ENCODE measurements at regions of chr10 and their contacts with region 1.

Region 1: GRCh38 chr10:35707642-35708420 is 65.7 kb upstream of the FZD8 start:
- DNase-seq: no peak
- H3K4me3 ChIP-seq: no peak overlapping the region
- H3K27ac ChIP-seq: no peak overlapping the region
- H3K4me1 ChIP-seq: no peaks in the 10 kb centered on the region
- H3K27me3 ChIP-seq: no peaks in the 10 kb centered on the region
- CTCF ChIP-seq: no peak

Region 2: GRCh38 chr10:35462491-35462934 is 245.3 kb before region 1 on chr10:
- CTCF ChIA-PET with region 1: no interaction called
- dilution Hi-C with region 1: no loop called
- in situ Hi-C with region 1: no loop called
- intact Hi-C with region 1: no loop called
- DNase-seq: no peak
- H3K4me3 ChIP-seq: no peak overlapping the region
- H3K27ac ChIP-seq: no peak overlapping the region
- H3K4me1 ChIP-seq: peaks cover 16% of the 10 kb centered on the region
- H3K27me3 ChIP-seq: no peaks in the 10 kb centered on the region
- CTCF ChIP-seq: no peak

Region 3: DNA sequence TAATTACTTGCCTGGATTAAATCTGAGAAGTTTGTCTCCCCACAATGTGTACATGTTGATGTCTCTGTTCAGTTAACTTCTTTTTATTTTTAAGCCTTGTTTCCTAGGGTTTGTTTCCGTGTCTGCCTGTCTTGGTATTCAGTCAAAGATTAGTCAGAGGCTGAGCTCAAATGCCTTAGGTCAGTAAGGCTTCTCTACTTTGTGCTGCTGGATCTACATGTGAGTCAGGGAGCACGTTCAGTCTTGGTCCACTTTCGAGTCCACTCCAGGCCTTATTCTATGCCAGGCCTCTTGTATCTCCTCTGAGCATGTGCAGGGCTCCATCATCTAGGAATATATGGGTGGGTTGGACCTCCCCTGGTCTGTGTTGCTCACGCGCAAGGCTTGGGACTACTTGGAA is 27.6 kb after region 1 on chr10:
- CTCF ChIA-PET with region 1: no interaction called
- dilution Hi-C with region 1: loop called (anchors 5 kb)
- in situ Hi-C with region 1: no loop called
- intact Hi-C with region 1: no loop called
- DNase-seq: peak; percentile 72
- H3K4me3 ChIP-seq: no peak overlapping the region
- H3K27ac ChIP-seq: no peak overlapping the region
- H3K4me1 ChIP-seq: peaks cover 2% of the 10 kb centered on the region
- H3K27me3 ChIP-seq: no peaks in the 10 kb centered on the region
- CTCF ChIP-seq: no peak